Ascending aorta (tissue), 2 donors: ENCODE measurements at regions of chr1 and their contacts with region 1.

Region 1: DNA sequence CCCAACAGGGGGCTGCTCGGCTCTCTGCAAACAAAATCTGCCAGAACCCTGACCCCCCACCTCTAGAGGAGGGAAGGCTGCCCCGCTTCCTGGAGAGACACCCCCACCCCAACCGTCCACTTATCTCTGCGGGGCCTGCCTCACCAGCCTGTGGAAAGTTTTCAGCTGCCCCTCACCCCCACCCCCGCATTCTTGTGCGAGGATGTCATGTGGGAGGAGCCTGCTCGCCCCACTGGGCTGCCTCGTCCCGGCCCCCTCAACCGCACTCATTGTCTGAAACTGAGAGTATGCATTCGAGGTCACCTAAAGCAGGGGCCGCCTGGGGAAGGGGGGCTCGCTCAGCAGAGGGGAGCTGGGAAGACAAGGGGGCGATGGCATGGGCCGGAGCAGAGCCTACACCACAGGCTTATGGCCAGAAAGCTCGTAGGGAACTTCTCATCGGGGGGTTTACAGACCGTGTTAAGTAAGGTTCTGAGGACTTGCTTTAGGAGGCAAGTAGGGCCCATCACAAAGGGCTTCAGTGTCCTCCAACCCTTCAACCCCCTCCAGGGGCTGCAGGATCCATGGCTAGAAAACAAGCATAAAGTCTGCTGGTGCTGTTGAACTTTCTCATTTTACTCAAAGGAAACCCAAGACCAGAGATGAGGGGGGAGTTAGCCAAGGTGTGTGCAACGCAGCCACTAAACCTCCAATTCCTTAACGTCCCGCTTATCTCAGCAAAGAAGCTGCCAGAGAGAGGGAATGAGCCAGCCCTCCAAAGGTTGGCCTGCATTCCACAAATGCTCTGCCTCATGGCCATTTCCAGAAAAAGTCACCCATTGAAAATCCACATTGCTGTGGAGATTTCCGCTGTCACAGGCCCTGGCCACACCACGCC is 9.4 kb downstream of the EPHA2 start:
- DNase-seq: peak in 1 of 2 donors; percentile 89
- H3K4me3 ChIP-seq: peak overlapping the region; percentile 46 to 59
- H3K27ac ChIP-seq: peak overlapping the region; percentile 84 to 94
- H3K4me1 ChIP-seq: peaks cover 13 to 53% of the 10 kb centered on the region in 2 donors
- H3K27me3 ChIP-seq: no peaks in the 10 kb centered on the region
- CTCF ChIP-seq: no peak

Region 2: GRCh38 chr1:16017461-16018303 is 128.8 kb before region 1 on chr1 and contains the start of gene HSPB7:
- intact Hi-C with region 1: loop called (anchors 5 kb)
- DNase-seq: peak; percentile 65 to 95
- H3K4me3 ChIP-seq: peak within 1 kb of the TSS; percentile 51 to 74
- H3K27ac ChIP-seq: peak within 1 kb of the TSS; percentile 95 to 98
- H3K4me1 ChIP-seq: peaks cover 20 to 58% of the 10 kb centered on the region in 2 donors
- H3K27me3 ChIP-seq: no peaks in the 10 kb centered on the region
- CTCF ChIP-seq: no peak
- total RNA-seq, gene HSPB7: 191 TPM

Region 3: DNA sequence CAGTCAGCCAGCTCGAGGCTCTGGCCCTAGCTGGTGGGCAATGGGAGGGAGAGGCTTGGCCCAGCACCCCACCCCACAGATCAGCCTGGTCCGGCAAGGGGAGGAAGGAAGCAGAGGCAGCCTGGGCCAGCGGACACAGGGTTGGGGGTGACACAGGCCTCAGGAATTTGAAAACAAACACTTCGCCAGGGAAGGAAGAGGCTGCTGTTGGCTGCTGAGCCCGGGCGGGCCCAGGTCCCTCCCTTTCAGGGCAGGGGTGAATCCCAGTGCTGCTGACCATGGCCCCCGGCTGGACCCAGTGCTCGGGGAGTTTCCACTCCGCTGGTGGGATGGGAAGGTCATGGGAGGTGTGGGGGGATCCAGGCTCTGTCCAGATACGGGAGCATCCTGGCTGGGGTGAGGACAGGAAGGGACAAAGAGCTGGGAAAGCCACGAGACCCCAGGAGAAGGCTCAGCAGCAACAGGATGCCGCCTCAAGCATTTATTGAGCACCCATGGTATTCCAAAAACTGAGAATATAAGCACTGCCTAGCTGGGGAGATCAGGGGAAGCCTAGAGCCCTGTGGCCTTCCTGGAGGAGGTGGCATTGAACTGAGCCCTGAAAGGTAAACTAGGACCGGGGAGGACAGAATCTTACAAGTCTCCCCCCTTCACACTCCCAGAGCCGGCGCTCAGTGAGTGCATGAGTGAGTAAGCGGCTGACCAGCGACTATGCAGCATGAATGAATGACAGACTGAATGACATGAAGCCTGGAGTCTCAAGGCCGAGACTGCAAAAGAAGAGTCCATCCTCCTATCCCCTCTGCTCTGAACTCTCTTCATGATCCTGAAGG is 35.6 kb after region 1 on chr1:
- intact Hi-C with region 1: loop called (anchors 5 kb)
- DNase-seq: peak; percentile 48 to 95
- H3K4me3 ChIP-seq: no peak overlapping the region
- H3K27ac ChIP-seq: peak overlapping the region; percentile 81 to 98
- H3K4me1 ChIP-seq: peaks cover 0 to 29% of the 10 kb centered on the region in 2 donors
- H3K27me3 ChIP-seq: no peaks in the 10 kb centered on the region
- CTCF ChIP-seq: no peak